Esophagus squamous epithelium (tissue), 5 donors: ENCODE measurements at regions of chr18 and their contacts with region 1.

Region 1: GRCh38 chr18:74353169-74353775 is 37.6 kb downstream of the C18orf63 start:
- DNase-seq: no peak
- H3K4me3 ChIP-seq: no peak overlapping the region
- H3K27ac ChIP-seq: no peak overlapping the region
- H3K4me1 ChIP-seq: no peaks in the 10 kb centered on the region
- H3K27me3 ChIP-seq: peaks cover 0 to 4% (median 0%) of the 10 kb centered on the region in 4 donors
- CTCF ChIP-seq: peak in 5 of 6 experiments; percentile 60 to 76 (median 64)
- POLR2A ChIP-seq: no peak

Region 2: GRCh38 chr18:74291771-74292540 is 61.3 kb before region 1 on chr18 and contains the start of gene CYB5A:
- intact Hi-C with region 1: no loop called
- DNase-seq: peak; percentile 88
- H3K4me3 ChIP-seq: peak within 1 kb of the TSS; percentile 64 to 97 (median 88)
- H3K27ac ChIP-seq: peak within 1 kb of the TSS; percentile 64 to 87 (median 82)
- H3K4me1 ChIP-seq: peaks cover 10 to 36% (median 18%) of the 10 kb centered on the region in 3 donors
- H3K27me3 ChIP-seq: no peaks in the 10 kb centered on the region
- CTCF ChIP-seq: peak in 1 of 6 experiments; percentile 41
- POLR2A ChIP-seq: peak in 2 of 4 donors; percentile 32 to 60
- total RNA-seq, gene CYB5A: 75.2 to 115 (median 90.3) TPM

Region 3: GRCh38 chr18:74493689-74494088 is 140.4 kb after region 1 on chr18:
- intact Hi-C with region 1: loop called (anchors 5 kb)
- DNase-seq: no peak
- H3K4me3 ChIP-seq: no peak overlapping the region
- H3K27ac ChIP-seq: no peak overlapping the region
- H3K4me1 ChIP-seq: peaks cover 13 to 28% (median 18%) of the 10 kb centered on the region in 3 donors
- H3K27me3 ChIP-seq: peaks cover 0 to 7% (median 0%) of the 10 kb centered on the region in 4 donors
- CTCF ChIP-seq: peak; percentile 50 to 84 (median 72)
- POLR2A ChIP-seq: no peak

Region 4: DNA sequence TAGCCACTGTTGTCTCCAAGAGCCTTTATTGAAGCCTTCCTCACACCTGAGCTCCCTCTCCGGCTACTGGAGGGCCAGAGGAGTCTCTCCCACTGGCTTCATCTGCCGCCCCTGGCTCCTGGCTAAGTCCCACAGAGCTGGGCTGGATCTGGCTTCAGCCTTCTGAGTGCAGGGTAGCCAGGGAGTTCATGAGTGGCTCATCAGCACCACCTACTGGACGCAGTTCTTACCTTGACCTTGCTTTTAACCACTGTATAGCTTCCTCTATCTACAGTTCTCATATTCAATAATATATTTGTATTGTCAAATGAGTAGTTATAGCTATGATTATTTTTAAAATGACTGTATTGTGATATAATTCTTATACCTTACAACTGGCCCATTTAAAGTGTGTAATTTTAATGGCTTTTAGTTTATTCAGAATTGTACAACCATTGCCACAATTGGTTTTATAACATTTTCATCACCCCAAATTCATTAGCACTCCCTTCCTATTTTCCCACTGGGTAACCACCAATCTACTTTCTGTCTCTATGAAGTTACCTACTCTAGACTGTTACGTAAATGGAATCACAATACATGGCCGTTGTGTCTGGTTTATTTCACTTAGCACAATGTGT is 198.8 kb after region 1 on chr18:
- intact Hi-C with region 1: loop called (anchors 5 kb)
- DNase-seq: peak; percentile 6
- H3K4me3 ChIP-seq: no peak overlapping the region
- H3K27ac ChIP-seq: no peak overlapping the region
- H3K4me1 ChIP-seq: peaks cover 0 to 2% (median 0%) of the 10 kb centered on the region in 3 donors
- H3K27me3 ChIP-seq: peaks cover 0 to 13% (median 0%) of the 10 kb centered on the region in 4 donors
- CTCF ChIP-seq: peak; percentile 70 to 79 (median 75)
- POLR2A ChIP-seq: no peak

Region 5: DNA sequence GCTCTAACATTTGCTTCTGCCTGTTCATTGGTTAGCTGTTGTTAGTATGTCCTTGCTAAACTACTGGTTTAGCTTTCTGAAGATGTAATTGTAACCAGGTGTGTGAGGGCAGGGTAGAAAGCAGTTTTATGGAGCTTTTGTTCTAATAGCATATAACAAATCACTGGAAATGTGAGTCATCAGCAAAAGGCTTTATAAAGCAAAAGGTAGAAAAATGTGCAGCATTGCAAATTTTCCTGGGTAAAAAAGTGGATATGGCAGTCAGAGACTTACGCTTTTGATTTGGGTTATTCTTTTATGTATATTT is 329.7 kb after region 1 on chr18:
- intact Hi-C with region 1: no loop called
- DNase-seq: no peak
- H3K4me3 ChIP-seq: no peak overlapping the region
- H3K27ac ChIP-seq: peak overlapping the region in 1 of 4 donors; percentile 18
- H3K4me1 ChIP-seq: peaks cover 0 to 19% (median 3%) of the 10 kb centered on the region in 3 donors
- H3K27me3 ChIP-seq: no peaks in the 10 kb centered on the region
- CTCF ChIP-seq: no peak
- POLR2A ChIP-seq: no peak